Pancreas (tissue), 10 donors: ENCODE measurements at regions of chr22 and their contacts with region 1.

Region 1: DNA sequence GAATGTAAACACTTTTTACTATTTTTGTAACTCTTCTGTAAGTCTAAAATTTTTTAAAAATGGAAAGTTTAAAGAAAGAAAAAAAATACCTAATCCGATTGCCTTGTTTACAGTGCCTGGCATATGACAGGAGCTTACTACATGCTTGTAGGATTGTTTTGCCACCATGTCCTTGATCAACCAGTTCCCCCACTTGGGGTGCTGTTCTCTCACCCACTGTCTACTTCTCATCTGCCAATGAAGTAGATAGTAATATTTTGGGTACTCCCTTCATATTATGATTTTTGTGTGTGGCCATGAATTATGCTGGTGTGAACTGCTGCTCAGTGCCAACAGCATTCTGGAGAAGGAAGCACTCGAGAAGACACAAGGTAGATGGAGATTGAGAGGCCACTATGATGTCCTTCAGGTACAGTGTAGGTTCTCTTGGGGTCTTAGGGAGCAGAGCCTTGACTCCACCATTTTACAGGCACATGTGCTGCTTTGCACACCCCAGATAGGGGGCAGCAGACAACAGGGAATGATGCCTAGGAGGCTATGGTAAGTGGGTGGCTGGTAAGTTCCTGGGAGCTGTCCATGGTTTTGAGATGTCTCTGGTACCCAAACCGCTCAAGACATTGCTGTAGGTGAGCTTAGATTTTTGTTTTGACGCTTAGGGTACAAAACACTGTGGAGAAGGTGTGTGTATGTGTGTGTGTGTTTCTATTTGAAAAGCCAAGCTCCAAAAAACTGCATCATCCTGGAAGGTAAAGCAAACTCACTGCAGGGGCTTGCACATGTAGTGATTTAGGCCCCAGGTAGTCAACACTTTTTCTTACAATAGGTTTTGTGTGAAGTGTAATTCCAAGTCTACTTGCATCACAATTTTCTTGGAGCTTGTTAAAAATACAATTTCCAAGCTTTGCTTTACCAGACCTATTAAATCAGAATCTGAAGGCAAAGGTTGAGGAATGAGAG is 494.5 kb upstream of the LARGE1 start:
- DNase-seq: peak in 4 of 6 donors; percentile 33 to 60 (median 56)
- ATAC-seq: peak in 3 of 4 donors; percentile 78 to 96 (median 82)
- H3K4me3 ChIP-seq: no peak overlapping the region
- H3K27ac ChIP-seq: no peak overlapping the region
- H3K4me1 ChIP-seq: no peaks in the 10 kb centered on the region
- H3K27me3 ChIP-seq: no peaks in the 10 kb centered on the region
- CTCF ChIP-seq: peak; percentile 18 to 63 (median 24)

Region 2: GRCh38 chr22:34587831-34588251 is 173.1 kb after region 1 on chr22:
- intact Hi-C with region 1: no loop called
- DNase-seq: peak in 2 of 6 donors; percentile 10 to 16
- ATAC-seq: peak; percentile 55 to 87 (median 70)
- H3K4me3 ChIP-seq: no peak overlapping the region
- H3K27ac ChIP-seq: peak overlapping the region in 2 of 4 donors; percentile 23 to 38
- H3K4me1 ChIP-seq: peaks cover 0 to 12% (median 0%) of the 10 kb centered on the region in 3 donors
- H3K27me3 ChIP-seq: no peaks in the 10 kb centered on the region
- CTCF ChIP-seq: no peak

Region 3: DNA sequence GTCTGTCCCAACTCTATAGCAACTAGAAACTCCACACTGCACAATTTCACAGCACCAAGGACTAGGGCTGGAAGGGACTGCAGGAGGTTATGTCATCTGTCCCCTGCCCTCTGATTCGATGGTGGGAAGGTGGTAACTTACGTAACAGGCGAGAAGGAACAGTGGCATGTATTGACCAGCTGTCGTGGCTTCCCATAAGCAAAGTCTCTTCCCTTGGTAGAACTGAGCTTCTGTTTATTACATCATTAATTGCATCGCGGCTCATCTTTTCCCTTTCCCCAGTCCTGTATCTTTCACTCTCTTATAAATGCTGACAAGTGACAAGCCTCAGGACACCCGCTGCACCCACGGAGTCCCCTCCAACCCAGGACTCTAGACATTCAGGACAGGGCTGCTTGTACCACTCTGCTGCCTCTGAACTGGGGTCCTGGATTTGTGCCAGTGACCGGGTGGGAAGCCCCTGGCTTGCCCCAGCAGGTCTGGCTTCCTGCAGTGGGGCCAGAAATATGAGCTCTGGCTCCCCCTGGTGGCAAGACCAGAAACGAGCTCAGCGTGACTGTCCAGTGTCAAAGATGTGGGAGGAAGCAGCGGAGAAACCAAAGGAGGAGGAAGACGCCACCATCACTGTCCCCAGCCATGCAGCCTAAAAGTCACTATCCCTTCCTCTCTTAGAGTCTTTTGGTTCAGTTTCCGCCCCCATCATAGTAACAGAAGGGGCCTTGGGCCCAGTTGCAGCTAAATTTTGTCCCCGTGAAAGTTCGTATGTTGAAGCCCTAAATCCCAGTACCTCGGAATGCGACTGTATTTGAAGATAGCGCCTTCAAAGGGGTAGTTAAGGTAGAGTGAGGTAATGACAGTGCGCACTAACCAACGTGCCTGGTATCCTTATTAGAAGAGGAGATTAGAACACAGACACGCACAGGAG is 735.7 kb after region 1 on chr22:
- intact Hi-C with region 1: loop called in 1 of 3 experiments (anchors 10 kb)
- DNase-seq: peak; percentile 34 to 83 (median 65)
- ATAC-seq: peak in 3 of 4 donors; percentile 71 to 80 (median 78)
- H3K4me3 ChIP-seq: no peak overlapping the region
- H3K27ac ChIP-seq: no peak overlapping the region
- H3K4me1 ChIP-seq: no peaks in the 10 kb centered on the region
- H3K27me3 ChIP-seq: peaks cover 0 to 5% (median 2%) of the 10 kb centered on the region in 4 donors
- CTCF ChIP-seq: peak; percentile 49 to 77 (median 70)